ENCODE measurements at regions of chr11 and their contacts with region 1.

Region 1: GRCh38 chr11:34174412-34175041 is 69.1 kb downstream of the NAT10 start:
- DNase-seq: peak; percentile 88
- H3K4me3 Mint-ChIP-seq: peak overlapping the region; percentile 41
- H3K27ac Mint-ChIP-seq: no peak overlapping the region
- H3K4me1 Mint-ChIP-seq: peaks cover 21% of the 10 kb centered on the region
- H3K27me3 Mint-ChIP-seq: no peaks in the 10 kb centered on the region

Region 2: GRCh38 chr11:33716236-33716635 is 458.3 kb before region 1 on chr11:
- CTCF ChIA-PET with region 1: no interaction called
- intact Hi-C with region 1: no loop called
- DNase-seq: peak; percentile 39
- H3K4me3 Mint-ChIP-seq: no peak overlapping the region
- H3K27ac Mint-ChIP-seq: no peak overlapping the region
- H3K4me1 Mint-ChIP-seq: peaks cover under 1% of the 10 kb centered on the region
- H3K27me3 Mint-ChIP-seq: no peaks in the 10 kb centered on the region

Region 3: GRCh38 chr11:33857933-33858371 is 316.6 kb before region 1 on chr11:
- CTCF ChIA-PET with region 1: interaction called, 3 read pairs
- intact Hi-C with region 1: loop called (anchors 10 kb)
- DNase-seq: peak; percentile 88
- H3K4me3 Mint-ChIP-seq: no peak overlapping the region
- H3K27ac Mint-ChIP-seq: no peak overlapping the region
- H3K4me1 Mint-ChIP-seq: no peaks in the 10 kb centered on the region
- H3K27me3 Mint-ChIP-seq: peaks cover 29% of the 10 kb centered on the region

Region 4: DNA sequence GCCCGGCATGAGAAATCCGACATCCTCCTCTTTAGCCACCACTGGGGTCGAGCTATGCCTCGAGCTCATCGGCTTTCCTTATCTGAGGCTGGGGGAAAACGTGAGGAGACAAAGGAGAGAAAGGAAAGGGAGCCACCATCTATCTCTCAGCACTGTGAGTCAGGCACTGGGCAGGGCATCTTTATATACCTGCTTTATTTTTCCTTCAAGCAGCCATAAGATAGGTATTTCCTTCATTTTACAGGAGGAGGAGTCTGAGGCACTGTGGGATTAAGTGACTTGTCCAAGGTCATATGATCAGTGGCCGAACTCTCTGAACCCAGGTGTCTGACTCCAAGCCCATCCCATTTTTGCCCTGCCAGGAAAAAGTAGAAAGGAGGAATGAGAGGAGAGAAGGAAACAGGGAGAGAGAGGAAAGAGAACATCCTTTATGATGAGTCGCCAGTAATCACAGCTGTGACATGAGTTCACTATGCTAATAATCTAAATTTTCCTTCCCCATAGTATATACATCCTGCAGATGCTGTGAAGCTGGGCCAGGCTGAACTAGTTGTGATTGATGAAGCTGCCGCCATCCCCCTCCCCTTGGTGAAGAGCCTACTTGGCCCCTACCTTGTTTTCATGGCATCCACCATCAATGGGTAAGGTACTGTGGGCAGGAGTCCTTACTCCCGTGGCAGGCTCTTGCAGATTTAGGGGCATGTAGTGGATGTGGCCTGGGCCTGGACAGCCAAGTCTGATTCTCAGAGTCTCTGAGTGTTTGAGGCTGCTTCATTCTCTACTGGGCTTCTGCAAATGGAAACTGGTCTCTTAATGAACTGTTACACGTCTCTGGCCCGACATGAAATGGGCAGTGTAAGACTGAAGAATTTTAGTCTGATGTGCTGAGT is 47.3 kb before region 1 on chr11:
- CTCF ChIA-PET with region 1: no interaction called
- intact Hi-C with region 1: no loop called
- DNase-seq: no peak
- H3K4me3 Mint-ChIP-seq: no peak overlapping the region
- H3K27ac Mint-ChIP-seq: no peak overlapping the region
- H3K4me1 Mint-ChIP-seq: no peaks in the 10 kb centered on the region
- H3K27me3 Mint-ChIP-seq: no peaks in the 10 kb centered on the region

Region 5: GRCh38 chr11:34145847-34146381 is 28.6 kb before region 1 on chr11:
- CTCF ChIA-PET with region 1: no interaction called
- intact Hi-C with region 1: no loop called
- DNase-seq: no peak
- H3K4me3 Mint-ChIP-seq: no peak overlapping the region
- H3K27ac Mint-ChIP-seq: no peak overlapping the region
- H3K4me1 Mint-ChIP-seq: no peaks in the 10 kb centered on the region
- H3K27me3 Mint-ChIP-seq: no peaks in the 10 kb centered on the region

Region 6: DNA sequence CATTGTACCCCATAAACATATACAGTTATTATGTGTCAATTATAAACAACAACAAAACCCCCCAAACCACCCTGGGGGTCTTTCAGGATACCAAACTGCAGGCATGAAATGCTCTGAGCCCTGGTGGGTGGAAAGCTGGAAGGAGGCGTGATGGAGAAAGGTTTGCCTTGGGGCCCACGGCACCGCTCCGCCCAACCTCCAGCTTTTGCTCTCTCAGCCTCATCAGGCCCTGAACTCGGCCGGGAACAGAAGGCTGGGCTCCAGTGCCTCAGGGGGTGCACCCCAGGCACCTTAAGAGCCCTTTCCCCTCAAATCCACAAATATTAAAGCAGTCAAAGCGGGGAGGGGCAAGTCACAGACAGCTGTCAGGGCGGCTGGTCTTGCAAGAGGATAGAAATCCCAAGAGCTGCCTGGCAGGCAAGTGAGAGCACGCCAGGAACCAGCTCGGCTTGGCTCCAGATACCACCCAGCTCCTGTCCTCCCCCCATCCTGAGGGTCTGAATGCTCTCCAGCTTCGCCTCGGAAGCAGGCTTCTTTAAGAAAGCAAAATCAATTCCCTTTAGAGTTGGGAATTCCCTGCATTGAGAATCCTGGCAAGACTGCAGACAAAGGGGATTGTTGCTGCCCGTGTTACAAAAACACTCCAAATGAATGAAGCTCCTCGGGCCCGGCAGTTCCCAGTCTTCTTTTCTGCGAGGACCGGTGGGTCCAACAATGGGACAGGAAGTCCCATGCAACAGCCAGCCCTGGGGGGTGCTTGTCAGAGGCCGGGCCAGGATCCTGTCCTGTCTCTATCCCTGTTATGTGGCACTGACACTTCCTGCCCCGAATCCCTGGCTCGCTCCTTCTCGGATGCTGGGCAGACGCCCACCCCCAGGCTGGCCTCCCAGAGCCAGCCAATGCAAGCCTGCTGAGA is 11.7 kb after region 1 on chr11:
- CTCF ChIA-PET with region 1: interaction called, 29 read pairs
- intact Hi-C with region 1: no loop called
- DNase-seq: no peak
- H3K4me3 Mint-ChIP-seq: no peak overlapping the region
- H3K27ac Mint-ChIP-seq: no peak overlapping the region
- H3K4me1 Mint-ChIP-seq: peaks cover 15% of the 10 kb centered on the region
- H3K27me3 Mint-ChIP-seq: no peaks in the 10 kb centered on the region

Region 7: DNA sequence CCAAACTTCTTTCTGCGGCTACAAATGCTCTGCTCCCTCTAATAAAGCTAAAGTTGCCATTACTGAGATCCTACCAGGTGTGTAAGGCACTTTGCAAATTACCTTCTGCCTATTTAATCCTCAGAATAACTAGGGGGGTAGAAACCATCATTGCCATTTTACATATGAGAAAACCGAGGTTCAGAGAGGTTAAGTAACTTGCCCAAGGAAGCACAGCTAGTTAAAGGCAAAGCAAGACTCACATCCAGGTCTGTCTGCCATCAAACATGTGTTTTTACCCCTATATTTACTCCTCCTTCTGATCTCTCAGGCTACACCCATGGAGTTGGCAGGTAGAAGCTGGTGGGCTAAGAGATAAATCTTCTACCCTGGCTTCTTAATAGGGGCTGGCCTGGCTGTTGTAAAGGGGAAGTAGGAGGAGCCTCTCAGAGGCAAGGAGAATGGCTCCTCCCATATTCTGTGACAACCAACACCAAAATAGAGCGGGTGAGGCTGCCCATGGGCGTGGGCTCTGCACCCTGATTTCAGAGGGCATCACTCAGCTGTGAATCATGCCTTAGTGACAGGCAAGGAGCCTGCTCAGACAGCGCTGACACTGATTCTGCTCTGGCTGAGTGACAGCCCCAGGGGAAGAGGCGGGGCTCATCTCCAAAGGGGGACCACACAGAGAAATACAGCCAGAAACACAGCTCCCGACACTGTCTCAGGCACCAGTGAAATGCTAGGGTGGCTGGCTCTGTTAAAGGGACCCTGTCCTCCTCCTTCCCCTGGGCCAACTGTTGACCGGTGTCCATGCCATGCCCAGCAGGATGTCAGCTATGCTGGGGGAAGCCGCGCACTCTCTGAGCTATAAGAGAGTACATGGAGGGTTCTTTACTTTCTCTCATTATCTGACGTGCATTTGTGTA is 76.5 kb after region 1 on chr11:
- CTCF ChIA-PET with region 1: interaction called, 15 read pairs
- intact Hi-C with region 1: loop called (anchors 2 kb)
- DNase-seq: peak; percentile 84
- H3K4me3 Mint-ChIP-seq: peak overlapping the region; percentile 20
- H3K27ac Mint-ChIP-seq: no peak overlapping the region
- H3K4me1 Mint-ChIP-seq: peaks cover 52% of the 10 kb centered on the region
- H3K27me3 Mint-ChIP-seq: peaks cover 12% of the 10 kb centered on the region

Region 8: GRCh38 chr11:34366522-34366921 is 192.0 kb after region 1 on chr11:
- CTCF ChIA-PET with region 1: interaction called, 31 read pairs
- intact Hi-C with region 1: no loop called
- DNase-seq: peak; percentile 55
- H3K4me3 Mint-ChIP-seq: no peak overlapping the region
- H3K27ac Mint-ChIP-seq: no peak overlapping the region
- H3K4me1 Mint-ChIP-seq: peaks cover 14% of the 10 kb centered on the region
- H3K27me3 Mint-ChIP-seq: peaks cover 9% of the 10 kb centered on the region

Region 9: GRCh38 chr11:34380696-34381095 is 206.2 kb after region 1 on chr11:
- CTCF ChIA-PET with region 1: no interaction called
- intact Hi-C with region 1: no loop called
- DNase-seq: no peak
- H3K4me3 Mint-ChIP-seq: no peak overlapping the region
- H3K27ac Mint-ChIP-seq: no peak overlapping the region
- H3K4me1 Mint-ChIP-seq: no peaks in the 10 kb centered on the region
- H3K27me3 Mint-ChIP-seq: no peaks in the 10 kb centered on the region

Region 10: GRCh38 chr11:34492806-34493414 is 318.4 kb after region 1 on chr11:
- CTCF ChIA-PET with region 1: interaction called, 3 read pairs
- intact Hi-C with region 1: loop called (anchors 1 kb)
- DNase-seq: peak; percentile 73
- H3K4me3 Mint-ChIP-seq: no peak overlapping the region
- H3K27ac Mint-ChIP-seq: no peak overlapping the region
- H3K4me1 Mint-ChIP-seq: no peaks in the 10 kb centered on the region
- H3K27me3 Mint-ChIP-seq: no peaks in the 10 kb centered on the region